ENCODE measurements at regions of chr1 and their contacts with region 1.

Region 1: GRCh38 chr1:201254625-201255506 is 28.4 kb upstream of the PKP1 start:
- DNase-seq: peak; percentile 81
- ATAC-seq: peak; percentile 64
- H3K4me3 Mint-ChIP-seq: no peak overlapping the region
- H3K27ac Mint-ChIP-seq: no peak overlapping the region
- H3K4me1 Mint-ChIP-seq: no peaks in the 10 kb centered on the region
- H3K27me3 Mint-ChIP-seq: peaks cover 4% of the 10 kb centered on the region

Region 2: DNA sequence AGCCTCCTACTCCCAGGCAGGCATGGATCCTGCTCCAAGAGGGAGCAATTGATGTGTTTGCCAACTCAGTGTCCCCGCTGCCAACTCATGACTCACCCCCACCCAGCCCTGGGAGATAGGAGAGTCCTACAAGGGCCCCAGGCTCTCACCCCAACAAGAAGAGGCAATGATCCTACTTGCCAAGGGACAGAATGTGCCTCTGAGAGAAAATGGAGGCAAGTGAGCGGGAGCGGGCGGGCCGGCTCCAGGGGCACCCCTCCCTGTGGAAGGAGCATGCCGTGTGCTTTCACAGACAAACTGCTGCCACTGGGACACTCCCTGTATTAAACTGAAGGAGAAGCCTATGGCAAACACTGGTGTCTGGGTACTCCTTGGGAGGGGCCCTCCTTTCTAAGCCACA is 45.1 kb after region 1 on chr1:
- CTCF ChIA-PET with region 1: no interaction called
- POLR2A ChIA-PET with region 1: no interaction called
- intact Hi-C with region 1: no loop called
- DNase-seq: no peak
- ATAC-seq: no peak
- H3K4me3 Mint-ChIP-seq: no peak overlapping the region
- H3K27ac Mint-ChIP-seq: no peak overlapping the region
- H3K4me1 Mint-ChIP-seq: no peaks in the 10 kb centered on the region
- H3K27me3 Mint-ChIP-seq: peaks cover 16% of the 10 kb centered on the region

Region 3: GRCh38 chr1:201361652-201362504 is 107.0 kb after region 1 on chr1:
- CTCF ChIA-PET with region 1: interaction called, 9 read pairs
- POLR2A ChIA-PET with region 1: no interaction called
- intact Hi-C with region 1: loop called (anchors 1 kb)
- DNase-seq: peak; percentile 62
- ATAC-seq: peak; percentile 73
- H3K4me3 Mint-ChIP-seq: no peak overlapping the region
- H3K27ac Mint-ChIP-seq: no peak overlapping the region
- H3K4me1 Mint-ChIP-seq: no peaks in the 10 kb centered on the region
- H3K27me3 Mint-ChIP-seq: peaks cover 5% of the 10 kb centered on the region

Region 4: GRCh38 chr1:201408176-201408833 is 153.4 kb after region 1 on chr1:
- CTCF ChIA-PET with region 1: interaction called, 6 read pairs
- POLR2A ChIA-PET with region 1: no interaction called
- intact Hi-C with region 1: loop called (anchors 1 kb)
- DNase-seq: peak; percentile 88
- ATAC-seq: peak; percentile 83
- H3K4me3 Mint-ChIP-seq: no peak overlapping the region
- H3K27ac Mint-ChIP-seq: no peak overlapping the region
- H3K4me1 Mint-ChIP-seq: no peaks in the 10 kb centered on the region
- H3K27me3 Mint-ChIP-seq: peaks cover 2% of the 10 kb centered on the region

Measured in activated CD4-positive, alpha-beta T cell treated with anti-CD3 and anti-CD28 coated beads for 36 hours (primary cell).